ENCODE measurements at regions of chr1 and their contacts with region 1.

Region 1: GRCh38 chr1:26602378-26602959 is 72.9 kb downstream of the RPS6KA1 start:
- DNase-seq: no peak
- H3K4me3 ChIP-seq: no peak overlapping the region
- H3K27ac ChIP-seq: no peak overlapping the region
- H3K4me1 ChIP-seq: no peaks in the 10 kb centered on the region; a peak in 1 of 7 replicates
- H3K27me3 ChIP-seq: no peaks in the 10 kb centered on the region
- CTCF ChIP-seq: peak in 2 of 3 experiments; percentile 74 to 75; a peak in 3 of 4 replicates
- EP300 ChIP-seq: no peak
- POLR2A ChIP-seq: no peak
- RAD21 ChIP-seq: peak; percentile 94 to 95

Region 2: GRCh38 chr1:26516987-26517765 is 85.3 kb before region 1 on chr1:
- CTCF ChIA-PET with region 1: no interaction called
- POLR2A ChIA-PET with region 1: no interaction called
- DNase-seq: no peak
- H3K4me3 ChIP-seq: no peak overlapping the region
- H3K27ac ChIP-seq: no peak overlapping the region
- H3K4me1 ChIP-seq: peaks cover 0 to 3% (median 0%) of the 10 kb centered on the region in 4 experiments; a peak in 1 of 7 replicates
- H3K27me3 ChIP-seq: no peaks in the 10 kb centered on the region; a peak in 1 of 7 replicates
- CTCF ChIP-seq: no peak
- EP300 ChIP-seq: no peak
- POLR2A ChIP-seq: no peak
- RAD21 ChIP-seq: no peak

Region 3: GRCh38 chr1:26677306-26678115 is 75.0 kb after region 1 on chr1:
- CTCF ChIA-PET with region 1: interaction called, 55 read pairs
- POLR2A ChIA-PET with region 1: no interaction called
- DNase-seq: peak in 1 of 2 experiments; percentile 58
- H3K4me3 ChIP-seq: no peak overlapping the region
- H3K27ac ChIP-seq: no peak overlapping the region
- H3K4me1 ChIP-seq: peaks cover 0 to 3% (median 0%) of the 10 kb centered on the region in 4 experiments; a peak in 1 of 7 replicates
- H3K27me3 ChIP-seq: peaks cover 0 to 2% (median 0%) of the 10 kb centered on the region in 4 experiments; a peak in 1 of 7 replicates
- CTCF ChIP-seq: peak; percentile 40 to 88 (median 71)
- EP300 ChIP-seq: no peak
- POLR2A ChIP-seq: no peak
- RAD21 ChIP-seq: peak; percentile 68 to 77

Region 4: DNA sequence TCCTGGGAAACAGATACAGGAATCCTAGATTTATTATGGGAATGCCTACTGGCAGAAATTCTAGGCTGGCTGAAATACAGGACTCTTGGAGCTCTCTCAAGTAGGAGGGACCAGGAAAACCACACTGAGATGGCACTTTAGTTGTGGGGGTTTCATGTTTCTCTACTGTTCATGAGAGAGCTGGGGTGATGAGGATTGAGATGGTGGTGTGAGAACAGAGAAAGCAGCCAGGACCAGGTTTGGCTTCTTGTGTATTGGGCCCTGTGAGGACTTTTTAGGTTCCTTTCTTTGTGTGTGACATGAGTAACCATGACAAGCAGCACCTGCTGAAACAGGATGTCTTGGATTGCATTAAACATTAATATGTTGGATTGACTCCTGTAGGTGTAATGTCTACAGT is 98.2 kb after region 1 on chr1:
- CTCF ChIA-PET with region 1: interaction called, 10 read pairs
- POLR2A ChIA-PET with region 1: interaction called, 3 read pairs
- DNase-seq: no peak
- H3K4me3 ChIP-seq: peak overlapping the region in 1 of 4 experiments; percentile 95; a peak in 3 of 8 replicates
- H3K27ac ChIP-seq: no peak overlapping the region
- H3K4me1 ChIP-seq: peaks cover 6 to 21% (median 15%) of the 10 kb centered on the region in 4 experiments; a peak in 6 of 7 replicates
- H3K27me3 ChIP-seq: no peaks in the 10 kb centered on the region
- CTCF ChIP-seq: no peak
- EP300 ChIP-seq: no peak
- POLR2A ChIP-seq: no peak
- RAD21 ChIP-seq: no peak

Region 5: DNA sequence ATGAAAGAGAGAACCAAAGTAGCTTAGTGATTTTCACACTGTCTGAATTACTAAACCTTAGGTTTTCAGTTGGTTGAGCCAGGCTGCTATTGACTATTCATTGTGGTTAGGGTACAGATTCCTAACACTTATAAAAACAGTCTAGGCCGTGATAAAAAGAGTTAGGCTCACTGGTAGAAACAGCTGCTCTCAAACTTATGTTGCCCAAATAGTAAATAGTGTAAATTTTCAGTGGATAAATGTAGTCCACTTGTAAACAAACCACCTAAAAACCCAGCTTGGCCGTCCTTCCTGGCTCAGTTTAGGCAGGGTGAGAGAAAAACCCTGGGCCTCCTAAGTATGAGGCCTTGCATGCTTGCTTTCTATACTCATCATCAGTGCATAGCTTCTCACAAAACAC is 128.2 kb after region 1 on chr1:
- CTCF ChIA-PET with region 1: interaction called, 10 read pairs
- POLR2A ChIA-PET with region 1: no interaction called
- DNase-seq: no peak
- H3K4me3 ChIP-seq: no peak overlapping the region
- H3K27ac ChIP-seq: no peak overlapping the region
- H3K4me1 ChIP-seq: peaks cover 7 to 21% (median 14%) of the 10 kb centered on the region in 4 experiments; a peak in 6 of 7 replicates
- H3K27me3 ChIP-seq: no peaks in the 10 kb centered on the region
- CTCF ChIP-seq: no peak
- EP300 ChIP-seq: no peak
- POLR2A ChIP-seq: no peak
- RAD21 ChIP-seq: no peak

Region 6: DNA sequence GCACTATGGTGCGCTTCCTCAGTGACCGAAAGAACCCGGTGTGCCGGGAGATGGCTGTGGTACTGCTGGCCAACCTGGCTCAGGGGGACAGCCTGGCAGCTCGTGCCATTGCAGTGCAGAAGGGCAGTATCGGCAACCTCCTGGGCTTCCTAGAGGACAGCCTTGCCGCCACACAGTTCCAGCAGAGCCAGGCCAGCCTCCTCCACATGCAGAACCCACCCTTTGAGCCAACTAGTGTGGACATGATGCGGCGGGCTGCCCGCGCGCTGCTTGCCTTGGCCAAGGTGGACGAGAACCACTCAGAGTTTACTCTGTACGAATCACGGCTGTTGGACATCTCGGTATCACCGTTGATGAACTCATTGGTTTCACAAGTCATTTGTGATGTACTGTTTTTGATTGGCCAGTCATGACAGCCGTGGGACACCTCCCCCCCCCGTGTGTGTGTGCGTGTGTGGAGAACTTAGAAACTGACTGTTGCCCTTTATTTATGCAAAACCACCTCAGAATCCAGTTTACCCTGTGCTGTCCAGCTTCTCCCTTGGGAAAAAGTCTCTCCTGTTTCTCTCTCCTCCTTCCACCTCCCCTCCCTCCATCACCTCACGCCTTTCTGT is 178.0 kb after region 1 on chr1:
- CTCF ChIA-PET with region 1: interaction called, 11 read pairs
- POLR2A ChIA-PET with region 1: no interaction called
- DNase-seq: no peak
- H3K4me3 ChIP-seq: no peak overlapping the region
- H3K27ac ChIP-seq: no peak overlapping the region
- H3K4me1 ChIP-seq: peaks cover 0 to 4% (median 2%) of the 10 kb centered on the region in 4 experiments; a peak in 2 of 7 replicates
- H3K27me3 ChIP-seq: no peaks in the 10 kb centered on the region
- CTCF ChIP-seq: no peak
- EP300 ChIP-seq: no peak
- POLR2A ChIP-seq: no peak
- RAD21 ChIP-seq: no peak

Region 7: GRCh38 chr1:26799479-26800142 is 197.1 kb after region 1 on chr1:
- CTCF ChIA-PET with region 1: interaction called, 20 read pairs
- POLR2A ChIA-PET with region 1: no interaction called
- DNase-seq: no peak
- H3K4me3 ChIP-seq: no peak overlapping the region
- H3K27ac ChIP-seq: no peak overlapping the region
- H3K4me1 ChIP-seq: peaks cover 3 to 12% (median 5%) of the 10 kb centered on the region in 4 experiments; a peak in 4 of 7 replicates
- H3K27me3 ChIP-seq: no peaks in the 10 kb centered on the region
- CTCF ChIP-seq: no peak
- EP300 ChIP-seq: no peak
- POLR2A ChIP-seq: no peak
- RAD21 ChIP-seq: no peak

Measured in H1 (cell line).